ENCODE measurements at regions of chr2 and their contacts with region 1.

Region 1: GRCh38 chr2:88554189-88554588 is 73.1 kb downstream of the EIF2AK3 start:
- DNase-seq: no peak
- ATAC-seq: no peak
- H3K4me3 ChIP-seq: no peak overlapping the region
- H3K27ac ChIP-seq: no peak overlapping the region
- H3K4me1 ChIP-seq: no peaks in the 10 kb centered on the region
- H3K27me3 ChIP-seq: peaks cover 5% of the 10 kb centered on the region; the same call in 1 of the 2 replicates
- CTCF ChIP-seq: no peak
- POLR2A ChIP-seq: no peak
- RAD21 ChIP-seq: 0 out of 2 replicates have a peak, but pooled peaks have one; percentile 19

Region 2: DNA sequence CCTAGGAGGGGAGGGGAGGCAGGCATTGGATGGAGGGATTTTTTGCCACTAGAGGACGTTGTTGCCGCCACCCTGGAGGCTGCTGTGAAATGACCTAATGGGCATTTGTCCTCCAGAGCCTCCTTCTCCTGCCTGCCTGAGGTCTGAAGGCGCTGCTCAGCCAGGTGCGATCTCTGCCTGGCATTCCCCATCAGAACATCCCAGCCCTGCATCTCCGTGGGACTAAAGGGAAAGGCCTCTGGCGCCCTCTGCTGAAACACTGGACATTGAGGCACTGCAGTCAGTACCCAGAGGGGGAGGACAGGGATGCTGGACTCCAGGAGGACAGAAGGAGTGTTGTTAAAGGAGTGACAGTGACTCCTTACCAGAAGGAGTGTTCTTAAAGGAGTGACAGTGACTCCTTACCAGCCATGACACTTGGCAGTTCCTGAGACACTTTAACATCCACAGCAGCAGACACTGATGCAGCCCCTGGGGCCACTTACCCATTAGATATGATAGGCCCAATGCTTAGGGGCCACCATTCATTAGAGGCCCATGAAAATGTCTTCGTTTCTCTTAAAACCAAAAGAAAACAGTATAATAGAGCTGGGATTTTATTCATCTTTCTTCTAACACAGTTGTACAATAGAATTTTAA is 367.0 kb before region 1 on chr2:
- CTCF ChIA-PET with region 1: no interaction called
- POLR2A ChIA-PET with region 1: no interaction called
- dilution Hi-C with region 1: no loop called
- in situ Hi-C with region 1: no loop called
- intact Hi-C with region 1: loop called (anchors 5 kb)
- DNase-seq: peak; percentile 21
- ATAC-seq: 0 out of 2 replicates have a peak, but pooled peaks have one; percentile 67
- H3K4me3 ChIP-seq: no peak overlapping the region
- H3K27ac ChIP-seq: no peak overlapping the region
- H3K4me1 ChIP-seq: no peaks in the 10 kb centered on the region
- H3K27me3 ChIP-seq: no peaks in the 10 kb centered on the region
- CTCF ChIP-seq: peak; percentile 55
- POLR2A ChIP-seq: no peak
- RAD21 ChIP-seq: peak; percentile 39